T-cell (primary cell): ENCODE measurements at regions of chr1 and their contacts with region 1.

Region 1: DNA sequence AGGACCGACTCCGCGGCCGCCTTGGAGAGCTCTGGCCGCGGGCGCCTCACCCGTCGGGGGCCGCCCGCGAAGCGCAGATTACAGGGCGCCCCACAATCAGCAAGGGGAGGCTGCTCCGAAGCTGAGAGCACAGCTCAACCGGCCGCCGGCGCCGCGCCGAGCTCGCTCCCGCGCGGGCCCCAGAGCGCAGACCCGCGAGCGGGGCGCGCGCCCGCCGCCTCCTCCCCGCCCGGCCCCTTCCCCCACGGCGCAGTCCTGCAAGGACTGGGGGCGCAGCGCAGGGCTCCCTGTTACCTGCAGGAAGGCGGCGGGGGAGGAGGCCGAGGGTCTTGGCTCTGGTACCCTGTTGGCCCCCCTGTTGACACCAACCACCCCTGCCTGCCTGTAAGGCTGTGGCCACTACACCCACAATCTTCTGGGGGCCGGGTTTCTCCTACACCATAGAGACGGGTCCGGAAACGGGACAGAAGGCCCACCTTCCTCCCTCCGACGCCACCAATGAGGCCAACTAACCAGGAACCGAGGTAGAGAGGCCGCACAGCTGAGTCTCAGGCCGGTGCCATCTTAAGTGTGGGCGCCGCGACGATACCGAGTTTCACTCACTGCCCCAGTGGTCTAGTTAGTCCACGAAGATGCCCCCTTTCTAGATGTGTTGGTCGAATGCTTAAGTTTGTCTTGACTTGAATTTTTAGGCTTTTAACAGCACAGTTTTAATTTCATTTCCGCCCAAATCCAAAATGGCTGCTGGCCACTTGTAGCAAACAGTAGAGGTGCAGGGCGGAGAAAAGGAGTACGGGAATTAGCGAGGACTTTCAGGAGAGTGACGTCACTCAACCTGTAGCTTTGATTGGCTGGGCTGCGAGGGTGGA is at the start of gene SCYL3:
- DNase-seq: peak; percentile 81 to 95 (median 88)
- ATAC-seq: peak; percentile 88 to 89 (median 88)
- H3K4me3 ChIP-seq: peak within 1 kb of the TSS; percentile 61 to 95
- H3K4me3 Mint-ChIP-seq: peak within 1 kb of the TSS; percentile 87 to 90 (median 89)
- H3K27ac ChIP-seq: peak within 1 kb of the TSS; percentile 98
- H3K27ac Mint-ChIP-seq: peak within 1 kb of the TSS; percentile 99 to 100
- H3K4me1 ChIP-seq: peaks cover 25 to 27% of the 10 kb centered on the region in 2 experiments
- H3K4me1 Mint-ChIP-seq: peaks cover 47 to 50% (median 49%) of the 10 kb centered on the region in 3 donors
- H3K27me3 ChIP-seq: no peaks in the 10 kb centered on the region
- H3K27me3 Mint-ChIP-seq: peaks cover 0 to 10% of the 10 kb centered on the region in 2 donors
- total RNA-seq, gene SCYL3: 10.5 to 20.8 (median 18.2) TPM

Region 2: GRCh38 chr1:169906938-169907337 is 13.2 kb after region 1 on chr1:
- CTCF ChIA-PET with region 1: interaction called in 1 of 2 experiments, 6 read pairs
- POLR2A ChIA-PET with region 1: interaction called, 3 to 11 read pairs
- DNase-seq: no peak
- ATAC-seq: no peak
- H3K4me3 ChIP-seq: no peak overlapping the region
- H3K4me3 Mint-ChIP-seq: no peak overlapping the region
- H3K27ac ChIP-seq: no peak overlapping the region
- H3K27ac Mint-ChIP-seq: no peak overlapping the region
- H3K4me1 ChIP-seq: peaks cover 3 to 4% of the 10 kb centered on the region in 2 experiments
- H3K4me1 Mint-ChIP-seq: peaks cover 19 to 37% (median 27%) of the 10 kb centered on the region in 3 donors
- H3K27me3 ChIP-seq: no peaks in the 10 kb centered on the region
- H3K27me3 Mint-ChIP-seq: no peaks in the 10 kb centered on the region